CD8-positive, alpha-beta memory T cell (primary cell): ENCODE measurements at regions of chr5 and their contacts with region 1.

Region 1: DNA sequence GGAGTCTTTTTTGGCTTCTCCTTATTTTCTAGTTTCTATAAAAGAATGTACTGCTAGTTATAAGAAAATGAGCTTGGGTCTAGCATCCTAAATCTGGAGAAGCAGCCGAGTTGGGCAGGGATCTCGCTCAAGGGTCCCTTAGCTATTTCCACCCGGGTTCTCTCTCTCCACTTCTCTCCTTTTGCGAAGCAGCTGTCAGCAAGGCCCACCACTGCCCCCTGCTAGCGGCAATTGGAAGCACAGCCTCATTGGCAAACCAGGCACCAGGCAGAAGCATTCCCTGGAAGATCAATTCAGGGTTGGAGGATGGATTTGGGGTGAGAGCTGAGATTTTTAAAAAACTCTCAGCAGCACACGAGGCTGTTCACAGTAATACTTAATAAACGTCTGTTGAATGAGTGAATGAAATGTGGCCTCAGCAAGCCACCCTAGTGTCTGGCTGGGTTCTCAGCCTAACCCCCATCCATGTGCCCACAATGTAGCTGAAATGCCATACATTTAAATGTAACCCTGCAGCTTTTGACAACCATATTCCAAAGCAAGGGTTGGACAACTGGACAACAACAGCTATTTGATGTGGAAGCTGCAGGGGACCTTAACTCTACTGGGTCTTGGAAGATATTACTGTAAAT is 34.6 kb upstream of the TNIP1 start:
- DNase-seq: peak; percentile 57 to 79 (median 65)
- H3K4me3 ChIP-seq: no peak overlapping the region
- H3K4me3 Mint-ChIP-seq: no peak overlapping the region
- H3K27ac ChIP-seq: no peak overlapping the region
- H3K27ac Mint-ChIP-seq: peak overlapping the region in 7 of 8 donors; percentile 21 to 57 (median 42)
- H3K4me1 ChIP-seq: peaks cover 4% of the 10 kb centered on the region
- H3K4me1 Mint-ChIP-seq: peaks cover 0 to 32% (median 6%) of the 10 kb centered on the region in 3 donors
- H3K27me3 ChIP-seq: no peaks in the 10 kb centered on the region
- H3K27me3 Mint-ChIP-seq: no peaks in the 10 kb centered on the region

Region 2: GRCh38 chr5:150656191-150657132 is 458.9 kb before region 1 on chr5:
- CTCF ChIA-PET with region 1: no interaction called
- POLR2A ChIA-PET with region 1: interaction called, 10 read pairs
- DNase-seq: peak; percentile 75 to 85 (median 82)
- H3K4me3 ChIP-seq: peak overlapping the region; percentile 71
- H3K4me3 Mint-ChIP-seq: peak overlapping the region; percentile 64 to 93 (median 81)
- H3K27ac ChIP-seq: no peak overlapping the region
- H3K27ac Mint-ChIP-seq: peak overlapping the region in 5 of 8 donors; percentile 9 to 73 (median 56)
- H3K4me1 ChIP-seq: peaks cover 9% of the 10 kb centered on the region
- H3K4me1 Mint-ChIP-seq: peaks cover 5 to 11% (median 11%) of the 10 kb centered on the region in 3 donors
- H3K27me3 ChIP-seq: no peaks in the 10 kb centered on the region
- H3K27me3 Mint-ChIP-seq: peaks cover under 1 to 5% of the 10 kb centered on the region in 2 donors

Region 3: GRCh38 chr5:151075698-151076331 is 39.6 kb before region 1 on chr5:
- CTCF ChIA-PET with region 1: interaction called, 40 read pairs
- POLR2A ChIA-PET with region 1: no interaction called
- DNase-seq: no peak
- H3K4me3 ChIP-seq: no peak overlapping the region
- H3K4me3 Mint-ChIP-seq: peak overlapping the region in 6 of 7 donors; percentile 29 to 92 (median 84)
- H3K27ac ChIP-seq: no peak overlapping the region
- H3K27ac Mint-ChIP-seq: peak overlapping the region in 7 of 8 donors; percentile 40 to 99 (median 81)
- H3K4me1 ChIP-seq: peaks cover 63% of the 10 kb centered on the region
- H3K4me1 Mint-ChIP-seq: peaks cover 75 to 88% (median 81%) of the 10 kb centered on the region in 3 donors
- H3K27me3 ChIP-seq: no peaks in the 10 kb centered on the region
- H3K27me3 Mint-ChIP-seq: no peaks in the 10 kb centered on the region

Region 4: DNA sequence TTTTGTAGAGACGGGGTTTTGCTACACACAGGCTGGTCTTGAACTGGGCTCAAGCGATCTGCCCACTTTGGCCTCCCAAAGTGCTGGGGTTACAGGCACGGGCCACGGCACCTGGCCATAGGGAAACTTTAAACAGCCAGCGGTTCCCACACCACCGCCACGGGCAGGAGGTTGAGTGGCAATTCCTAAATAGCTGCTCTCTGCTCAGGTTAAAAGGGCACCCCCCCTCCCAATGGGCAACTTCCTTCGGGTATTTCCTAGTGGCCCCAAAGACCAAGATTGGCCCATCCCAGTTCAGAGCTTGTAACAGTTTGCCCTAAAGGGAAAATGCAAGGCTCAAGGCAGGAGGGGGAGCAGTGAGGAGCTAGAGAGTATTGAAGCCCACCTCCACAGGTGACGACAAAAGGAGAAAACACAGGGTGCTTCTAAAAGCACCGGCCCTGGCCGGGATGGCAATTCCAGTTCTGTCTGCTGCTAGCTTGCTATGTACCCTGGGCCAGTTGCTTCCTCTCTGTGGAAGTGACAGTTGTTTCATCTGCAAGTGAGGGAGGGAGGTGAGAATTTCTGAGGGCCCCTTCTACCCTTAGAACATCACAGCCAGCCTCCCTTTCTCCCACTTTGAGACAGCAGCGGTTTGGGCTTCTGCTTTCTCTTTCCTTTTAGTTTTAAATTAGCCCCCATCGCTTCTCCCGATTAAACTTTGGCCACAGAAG is 17.4 kb before region 1 on chr5:
- CTCF ChIA-PET with region 1: interaction called, 55 read pairs
- POLR2A ChIA-PET with region 1: interaction called, 5 read pairs
- DNase-seq: peak in 4 of 5 donors; percentile 18 to 64 (median 42)
- H3K4me3 ChIP-seq: no peak overlapping the region
- H3K4me3 Mint-ChIP-seq: peak overlapping the region; percentile 7 to 87 (median 74)
- H3K27ac ChIP-seq: peak overlapping the region; percentile 14
- H3K27ac Mint-ChIP-seq: peak overlapping the region; percentile 81 to 97 (median 92)
- H3K4me1 ChIP-seq: peaks cover 61% of the 10 kb centered on the region
- H3K4me1 Mint-ChIP-seq: peaks cover 65 to 84% (median 77%) of the 10 kb centered on the region in 3 donors
- H3K27me3 ChIP-seq: no peaks in the 10 kb centered on the region
- H3K27me3 Mint-ChIP-seq: peaks cover 0 to 4% of the 10 kb centered on the region in 2 donors

Region 5: GRCh38 chr5:151150471-151151262 is 35.3 kb after region 1 on chr5:
- CTCF ChIA-PET with region 1: interaction called, 16 read pairs
- POLR2A ChIA-PET with region 1: no interaction called
- DNase-seq: peak; percentile 58 to 91 (median 77)
- H3K4me3 ChIP-seq: peak overlapping the region; percentile 35
- H3K4me3 Mint-ChIP-seq: peak overlapping the region; percentile 51 to 85 (median 74)
- H3K27ac ChIP-seq: peak overlapping the region; percentile 64
- H3K27ac Mint-ChIP-seq: peak overlapping the region; percentile 92 to 99 (median 97)
- H3K4me1 ChIP-seq: peaks cover 98% of the 10 kb centered on the region
- H3K4me1 Mint-ChIP-seq: peaks cover 97 to 100% (median 99%) of the 10 kb centered on the region in 3 donors
- H3K27me3 ChIP-seq: no peaks in the 10 kb centered on the region
- H3K27me3 Mint-ChIP-seq: no peaks in the 10 kb centered on the region

Region 6: GRCh38 chr5:151239237-151239861 is 124.0 kb after region 1 on chr5:
- CTCF ChIA-PET with region 1: interaction called, 14 read pairs
- POLR2A ChIA-PET with region 1: no interaction called
- DNase-seq: peak; percentile 42 to 73 (median 53)
- H3K4me3 ChIP-seq: no peak overlapping the region
- H3K4me3 Mint-ChIP-seq: peak overlapping the region in 6 of 7 donors; percentile 9 to 84 (median 50)
- H3K27ac ChIP-seq: no peak overlapping the region
- H3K27ac Mint-ChIP-seq: peak overlapping the region in 2 of 8 donors; percentile 12 to 25
- H3K4me1 ChIP-seq: peaks cover 17% of the 10 kb centered on the region
- H3K4me1 Mint-ChIP-seq: peaks cover 23 to 45% (median 25%) of the 10 kb centered on the region in 3 donors
- H3K27me3 ChIP-seq: no peaks in the 10 kb centered on the region
- H3K27me3 Mint-ChIP-seq: no peaks in the 10 kb centered on the region

Region 7: DNA sequence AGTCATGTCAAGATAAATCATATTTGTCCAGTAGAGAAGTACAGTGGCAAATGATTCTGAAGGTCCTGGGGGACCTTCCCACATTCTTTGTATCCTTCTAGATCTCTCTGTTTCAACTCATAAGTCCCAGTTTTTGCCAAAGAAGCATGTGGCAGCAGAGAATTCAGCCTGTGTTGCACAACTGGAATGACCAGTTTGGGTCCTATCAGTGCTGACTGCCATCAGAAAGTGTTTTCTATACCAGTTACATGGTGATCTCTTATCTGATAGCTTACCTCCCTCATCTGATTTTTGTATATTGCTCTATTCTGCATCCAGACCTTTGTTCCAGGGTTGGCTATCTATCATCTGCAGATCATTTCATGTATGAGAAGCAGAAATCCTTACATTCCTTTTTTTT is 159.3 kb after region 1 on chr5:
- CTCF ChIA-PET with region 1: no interaction called
- POLR2A ChIA-PET with region 1: no interaction called
- DNase-seq: no peak
- H3K4me3 ChIP-seq: no peak overlapping the region
- H3K4me3 Mint-ChIP-seq: no peak overlapping the region
- H3K27ac ChIP-seq: no peak overlapping the region
- H3K27ac Mint-ChIP-seq: no peak overlapping the region
- H3K4me1 ChIP-seq: no peaks in the 10 kb centered on the region
- H3K4me1 Mint-ChIP-seq: no peaks in the 10 kb centered on the region
- H3K27me3 ChIP-seq: no peaks in the 10 kb centered on the region
- H3K27me3 Mint-ChIP-seq: peaks cover 0 to 2% of the 10 kb centered on the region in 2 donors